ENCODE measurements at regions of chr13 and their contacts with region 1.

Region 1: DNA sequence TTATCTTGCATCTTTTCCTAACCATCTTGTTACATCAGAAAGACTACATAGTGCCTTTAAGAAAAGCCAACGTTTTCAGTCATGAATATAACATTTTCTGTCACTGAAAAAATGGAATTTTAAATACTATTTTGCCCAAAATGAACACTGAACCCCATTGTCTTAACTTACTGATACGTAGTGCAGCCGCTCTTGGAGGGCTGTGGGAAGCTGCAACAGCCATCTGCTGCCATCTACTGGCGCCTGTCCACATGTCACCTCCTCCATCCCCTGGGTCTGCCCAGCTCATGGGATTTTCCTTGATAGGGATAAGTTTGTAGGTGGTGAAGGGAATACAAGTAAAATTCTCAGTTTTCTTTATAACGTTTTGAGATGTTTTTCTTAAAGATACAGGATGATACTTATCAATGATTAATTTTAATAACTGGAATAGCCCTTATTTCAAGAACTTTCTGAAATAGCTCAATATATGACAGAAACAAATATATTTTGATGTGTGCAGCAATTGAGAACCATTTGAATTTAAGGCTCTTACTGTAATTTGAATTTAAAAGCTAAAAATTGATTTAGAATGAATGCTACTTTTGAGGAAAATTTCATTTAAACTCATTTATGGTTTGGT is 73.7 kb downstream of the GGACT start:
- DNase-seq: peak; percentile 68 to 87
- ATAC-seq: peak; percentile 69

Region 2: GRCh38 chr13:99656092-99656745 is 858.7 kb before region 1 on chr13:
- intact Hi-C with region 1: loop called in 1 of 2 experiments (anchors 5 kb)
- DNase-seq: peak; percentile 73 to 86
- ATAC-seq: peak; percentile 81

Region 3: GRCh38 chr13:100214886-100215285 is 300.0 kb before region 1 on chr13:
- intact Hi-C with region 1: no loop called
- DNase-seq: no peak
- ATAC-seq: no peak

Region 4: GRCh38 chr13:100694722-100695508 is 180.0 kb after region 1 on chr13:
- intact Hi-C with region 1: no loop called
- DNase-seq: peak in 1 of 2 donors; percentile 31
- ATAC-seq: peak; percentile 71

Region 5: GRCh38 chr13:100789481-100789880 is 274.6 kb after region 1 on chr13:
- intact Hi-C with region 1: no loop called
- DNase-seq: no peak
- ATAC-seq: no peak